K562 (cell line): ENCODE measurements at regions of chr7 and their contacts with region 1.

Region 1: DNA sequence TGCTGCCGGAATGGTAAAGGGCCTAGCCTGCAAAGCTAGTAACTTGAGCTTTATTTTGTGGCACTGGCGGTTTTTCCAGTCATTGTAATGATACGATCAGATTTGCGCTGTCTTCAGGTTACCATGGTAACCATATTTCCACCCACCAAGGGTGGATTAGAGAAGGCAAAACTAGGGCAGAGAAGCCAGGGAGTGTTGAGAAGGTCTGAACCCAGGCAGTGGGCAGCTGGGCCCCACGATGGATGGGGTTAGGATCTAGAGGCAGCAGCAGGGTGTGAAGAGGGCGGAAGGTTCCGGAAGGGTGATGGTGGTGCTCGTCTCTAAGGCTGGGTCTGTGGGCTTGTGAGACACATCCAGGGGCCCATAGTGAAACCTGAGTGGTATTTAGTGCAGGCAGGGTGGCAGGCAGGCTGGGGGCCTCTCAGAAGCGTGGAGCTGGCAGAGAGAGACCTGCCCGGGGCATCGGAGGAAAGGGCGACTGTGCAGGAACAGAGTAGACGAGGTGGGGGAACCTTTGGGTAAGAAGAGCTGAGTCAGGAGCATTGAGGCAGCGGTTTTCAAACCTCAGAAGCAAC is 87.9 kb upstream of the GTF2I start:
- DNase-seq: peak in 1 of 4 experiments; percentile 24
- ATAC-seq: no peak
- H3K4me3 ChIP-seq: no peak overlapping the region
- H3K27ac ChIP-seq: no peak overlapping the region
- H3K4me1 ChIP-seq: peaks cover 9 to 19% of the 10 kb centered on the region in 2 experiments; a peak in 4 of 5 replicates
- H3K27me3 ChIP-seq: no peaks in the 10 kb centered on the region
- CTCF ChIP-seq: no peak
- EP300 ChIP-seq: no peak
- POLR2A ChIP-seq: no peak
- RAD21 ChIP-seq: no peak

Region 2: DNA sequence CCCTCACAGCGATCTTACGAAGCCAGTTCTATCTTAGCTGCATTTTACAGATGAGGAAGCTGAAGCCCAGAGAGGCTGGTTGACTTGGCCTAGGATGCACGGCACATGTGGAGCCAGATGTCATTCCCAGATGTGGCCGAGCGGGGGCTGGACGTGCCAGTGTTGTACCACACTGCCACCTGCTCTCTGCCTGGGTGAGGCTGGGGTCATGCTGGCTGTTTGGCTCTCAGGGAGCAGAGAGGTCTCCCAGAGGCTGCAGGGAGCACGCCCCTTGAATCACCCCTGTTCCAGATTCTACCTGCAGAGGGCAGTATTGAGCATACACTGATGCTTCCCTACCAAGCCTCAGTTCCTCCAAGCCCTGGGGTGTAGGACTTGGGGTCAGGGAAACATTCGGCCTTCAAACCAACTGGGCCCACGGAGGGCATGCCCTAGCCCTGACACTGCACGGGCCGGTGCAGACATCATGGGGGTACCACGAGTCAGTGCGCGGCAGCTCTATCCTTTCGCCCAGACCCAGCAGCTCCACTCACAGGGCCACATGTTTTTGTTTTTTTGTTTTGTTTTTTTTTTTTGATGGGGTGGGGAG is 119.7 kb before region 1 on chr7:
- CTCF ChIA-PET with region 1: no interaction called
- POLR2A ChIA-PET with region 1: no interaction called
- in situ Hi-C with region 1: no loop called
- intact Hi-C with region 1: loop called (anchors 10 kb)
- DNase-seq: peak; percentile 80 to 87 (median 84)
- ATAC-seq: peak; percentile 63
- H3K4me3 ChIP-seq: no peak overlapping the region
- H3K27ac ChIP-seq: no peak overlapping the region
- H3K4me1 ChIP-seq: peaks cover 21 to 34% of the 10 kb centered on the region in 2 experiments
- H3K27me3 ChIP-seq: peaks cover 3 to 10% of the 10 kb centered on the region in 2 experiments; a peak in 4 of 5 replicates
- CTCF ChIP-seq: peak; percentile 83 to 96 (median 84)
- EP300 ChIP-seq: no peak
- POLR2A ChIP-seq: no peak
- RAD21 ChIP-seq: peak; percentile 43 to 64